Activated T-helper 2 cell treated with anti-CD3 and anti-CD28 coated beads, Interferon-gamma antibody, Interleukin-2, Interleukin-4, amounts not matched to agents 10 μg/mL and 5 μg/mL and 100 μg/mL, durations not matched to agents 14 hours and 24 hours and 36 hours (primary cell): ENCODE measurements at regions of chr6 and their contacts with region 1.

Region 1: GRCh38 chr6:109308018-109308492 is 74.2 kb downstream of the CD164 start:
- DNase-seq: no peak
- H3K4me3 Mint-ChIP-seq: no peak overlapping the region
- H3K27ac Mint-ChIP-seq: peak overlapping the region; percentile 76
- H3K4me1 Mint-ChIP-seq: peaks cover 35% of the 10 kb centered on the region
- H3K27me3 Mint-ChIP-seq: no peaks in the 10 kb centered on the region

Region 2: DNA sequence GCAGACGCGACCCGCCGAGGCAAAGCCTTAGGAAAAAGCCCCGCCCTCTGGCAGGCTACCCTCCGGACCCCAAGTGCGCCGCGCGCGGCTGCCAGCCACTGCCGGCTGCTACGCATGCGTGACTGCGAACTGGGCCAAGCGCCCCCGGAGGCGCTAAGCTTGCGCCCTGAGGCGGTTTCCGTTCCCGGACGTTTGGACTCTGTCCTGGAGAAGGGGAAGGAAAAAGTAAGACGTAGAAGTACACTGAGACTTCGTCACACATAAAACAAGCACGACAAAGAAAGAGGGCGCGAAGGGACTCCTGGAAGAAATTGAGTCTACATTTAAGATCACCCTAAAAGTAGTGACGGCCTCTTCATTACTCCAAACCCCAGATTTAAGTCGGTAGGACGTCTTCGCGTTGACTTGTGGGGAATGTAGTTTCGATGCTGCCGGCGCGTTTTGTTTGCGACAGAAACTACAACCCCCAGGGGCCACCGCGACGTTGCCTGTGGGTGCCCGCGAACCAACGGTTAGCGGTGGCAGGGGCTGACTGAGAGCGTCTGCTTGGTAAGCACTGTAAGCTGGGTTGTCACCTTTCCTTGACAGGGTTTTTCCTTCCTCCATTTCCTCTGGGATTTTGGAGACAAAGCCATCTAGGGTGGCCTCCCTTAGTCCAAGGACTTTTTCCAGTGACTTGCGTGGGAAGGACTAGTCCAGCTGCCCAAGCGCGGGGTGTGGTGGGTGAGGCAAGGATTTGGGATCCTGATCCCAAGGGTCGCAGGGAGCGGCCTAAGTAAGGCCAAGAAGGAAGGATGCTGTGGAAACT is 212.8 kb before region 1 on chr6 and contains the start of gene CEP57L1:
- intact Hi-C with region 1: loop called (anchors 2 kb)
- DNase-seq: peak; percentile 92
- H3K4me3 Mint-ChIP-seq: peak within 1 kb of the TSS; percentile 93
- H3K27ac Mint-ChIP-seq: peak within 1 kb of the TSS; percentile 99
- H3K4me1 Mint-ChIP-seq: peaks cover 45% of the 10 kb centered on the region
- H3K27me3 Mint-ChIP-seq: no peaks in the 10 kb centered on the region
- total RNA-seq, gene CEP57L1: 18.2 and 25.4 TPM in 2 replicates

Region 3: GRCh38 chr6:109202409-109203284 is 105.4 kb before region 1 on chr6:
- intact Hi-C with region 1: loop called (anchors 1 kb)
- DNase-seq: no peak
- H3K4me3 Mint-ChIP-seq: no peak overlapping the region
- H3K27ac Mint-ChIP-seq: no peak overlapping the region
- H3K4me1 Mint-ChIP-seq: peaks cover 5% of the 10 kb centered on the region
- H3K27me3 Mint-ChIP-seq: no peaks in the 10 kb centered on the region

Region 4: GRCh38 chr6:109373762-109374161 is 65.7 kb after region 1 on chr6:
- intact Hi-C with region 1: loop called (anchors 2 kb)
- DNase-seq: peak; percentile 43
- H3K4me3 Mint-ChIP-seq: peak overlapping the region; percentile 75
- H3K27ac Mint-ChIP-seq: peak overlapping the region; percentile 89
- H3K4me1 Mint-ChIP-seq: peaks cover 71% of the 10 kb centered on the region
- H3K27me3 Mint-ChIP-seq: no peaks in the 10 kb centered on the region

Region 5: GRCh38 chr6:110063594-110064263 is 755.7 kb after region 1 on chr6:
- intact Hi-C with region 1: no loop called
- DNase-seq: no peak
- H3K4me3 Mint-ChIP-seq: no peak overlapping the region
- H3K27ac Mint-ChIP-seq: no peak overlapping the region
- H3K4me1 Mint-ChIP-seq: peaks cover 2% of the 10 kb centered on the region
- H3K27me3 Mint-ChIP-seq: peaks cover 35% of the 10 kb centered on the region

Region 6: GRCh38 chr6:110116258-110116657 is 808.2 kb after region 1 on chr6:
- intact Hi-C with region 1: no loop called
- DNase-seq: no peak
- H3K4me3 Mint-ChIP-seq: no peak overlapping the region
- H3K27ac Mint-ChIP-seq: no peak overlapping the region
- H3K4me1 Mint-ChIP-seq: no peaks in the 10 kb centered on the region
- H3K27me3 Mint-ChIP-seq: peaks cover 5% of the 10 kb centered on the region